K562 (cell line): ENCODE measurements at regions of chr11 and their contacts with region 1.

Region 1: GRCh38 chr11:114197799-114198500 is 98.2 kb upstream of the NNMT start:
- DNase-seq: no peak
- ATAC-seq: no peak
- H3K4me3 ChIP-seq: no peak overlapping the region
- H3K27ac ChIP-seq: no peak overlapping the region
- H3K4me1 ChIP-seq: peaks cover 7% of the 10 kb centered on the region in 2 experiments; a peak in 3 of 5 replicates
- H3K27me3 ChIP-seq: no peaks in the 10 kb centered on the region
- CTCF ChIP-seq: no peak
- EP300 ChIP-seq: no peak
- POLR2A ChIP-seq: no peak
- RAD21 ChIP-seq: no peak

Region 2: DNA sequence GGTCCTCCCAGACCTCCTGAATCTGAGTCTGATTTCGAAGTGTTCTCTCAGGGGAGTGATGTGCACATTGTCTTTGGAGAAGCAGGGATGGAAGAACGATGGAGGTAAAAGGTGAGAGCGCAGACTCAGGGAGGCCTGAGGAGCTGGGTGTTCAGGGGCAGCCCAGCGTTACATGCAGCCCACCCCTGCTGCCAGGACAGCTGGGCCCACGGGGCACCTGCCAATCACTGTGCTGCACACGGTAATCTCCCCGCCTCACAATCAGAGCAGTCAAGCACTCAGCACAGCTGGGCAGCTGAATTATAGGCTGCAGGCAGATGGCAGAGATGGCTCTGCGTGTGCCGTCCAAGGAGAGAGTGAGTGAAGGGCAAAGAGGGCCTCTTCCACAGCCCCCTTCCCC is 241.0 kb before region 1 on chr11:
- CTCF ChIA-PET with region 1: no interaction called
- POLR2A ChIA-PET with region 1: no interaction called
- in situ Hi-C with region 1: no loop called
- intact Hi-C with region 1: no loop called
- DNase-seq: no peak
- ATAC-seq: no peak
- H3K4me3 ChIP-seq: no peak overlapping the region
- H3K27ac ChIP-seq: no peak overlapping the region
- H3K4me1 ChIP-seq: no peaks in the 10 kb centered on the region
- H3K27me3 ChIP-seq: peaks cover 18 to 46% of the 10 kb centered on the region in 2 experiments
- CTCF ChIP-seq: no peak
- EP300 ChIP-seq: no peak
- POLR2A ChIP-seq: no peak
- RAD21 ChIP-seq: no peak

Region 3: GRCh38 chr11:113994077-113994954 is 203.6 kb before region 1 on chr11:
- CTCF ChIA-PET with region 1: no interaction called
- POLR2A ChIA-PET with region 1: no interaction called
- in situ Hi-C with region 1: no loop called
- intact Hi-C with region 1: loop called (anchors 10 kb)
- DNase-seq: peak; percentile 40 to 65 (median 50)
- ATAC-seq: peak; percentile 80
- H3K4me3 ChIP-seq: no peak overlapping the region
- H3K27ac ChIP-seq: no peak overlapping the region
- H3K4me1 ChIP-seq: no peaks in the 10 kb centered on the region
- H3K27me3 ChIP-seq: peaks cover 0 to 16% of the 10 kb centered on the region in 2 experiments; a peak in 2 of 5 replicates
- CTCF ChIP-seq: peak; percentile 70 to 77 (median 74)
- EP300 ChIP-seq: no peak
- POLR2A ChIP-seq: no peak
- RAD21 ChIP-seq: peak; percentile 82 to 89

Region 4: GRCh38 chr11:114036156-114036811 is 161.7 kb before region 1 on chr11:
- CTCF ChIA-PET with region 1: no interaction called
- POLR2A ChIA-PET with region 1: no interaction called
- in situ Hi-C with region 1: no loop called
- intact Hi-C with region 1: loop called (anchors 2 kb)
- DNase-seq: peak; percentile 71 to 80 (median 76)
- ATAC-seq: peak; percentile 100
- H3K4me3 ChIP-seq: no peak overlapping the region
- H3K27ac ChIP-seq: no peak overlapping the region
- H3K4me1 ChIP-seq: peaks cover 0 to 6% of the 10 kb centered on the region in 2 experiments; a peak in 1 of 5 replicates
- H3K27me3 ChIP-seq: peaks cover 12 to 47% of the 10 kb centered on the region in 2 experiments
- CTCF ChIP-seq: peak; percentile 83 to 97 (median 88)
- EP300 ChIP-seq: no peak
- POLR2A ChIP-seq: no peak
- RAD21 ChIP-seq: peak; percentile 88 to 90

Region 5: GRCh38 chr11:114148013-114148382 is 50.0 kb before region 1 on chr11:
- CTCF ChIA-PET with region 1: no interaction called
- POLR2A ChIA-PET with region 1: no interaction called
- in situ Hi-C with region 1: no loop called
- intact Hi-C with region 1: loop called (anchors 5 kb)
- DNase-seq: peak; percentile 27 to 82 (median 52)
- ATAC-seq: peak; percentile 85
- H3K4me3 ChIP-seq: no peak overlapping the region
- H3K27ac ChIP-seq: no peak overlapping the region; the same call in 2 of the 3 replicates
- H3K4me1 ChIP-seq: peaks cover 7 to 28% of the 10 kb centered on the region in 2 experiments
- H3K27me3 ChIP-seq: peaks cover 10 to 15% of the 10 kb centered on the region in 2 experiments
- CTCF ChIP-seq: no peak
- EP300 ChIP-seq: no peak; the same call in 1 of the 2 replicates
- POLR2A ChIP-seq: no peak
- RAD21 ChIP-seq: no peak; a peak in 1 of 4 replicates

Region 6: DNA sequence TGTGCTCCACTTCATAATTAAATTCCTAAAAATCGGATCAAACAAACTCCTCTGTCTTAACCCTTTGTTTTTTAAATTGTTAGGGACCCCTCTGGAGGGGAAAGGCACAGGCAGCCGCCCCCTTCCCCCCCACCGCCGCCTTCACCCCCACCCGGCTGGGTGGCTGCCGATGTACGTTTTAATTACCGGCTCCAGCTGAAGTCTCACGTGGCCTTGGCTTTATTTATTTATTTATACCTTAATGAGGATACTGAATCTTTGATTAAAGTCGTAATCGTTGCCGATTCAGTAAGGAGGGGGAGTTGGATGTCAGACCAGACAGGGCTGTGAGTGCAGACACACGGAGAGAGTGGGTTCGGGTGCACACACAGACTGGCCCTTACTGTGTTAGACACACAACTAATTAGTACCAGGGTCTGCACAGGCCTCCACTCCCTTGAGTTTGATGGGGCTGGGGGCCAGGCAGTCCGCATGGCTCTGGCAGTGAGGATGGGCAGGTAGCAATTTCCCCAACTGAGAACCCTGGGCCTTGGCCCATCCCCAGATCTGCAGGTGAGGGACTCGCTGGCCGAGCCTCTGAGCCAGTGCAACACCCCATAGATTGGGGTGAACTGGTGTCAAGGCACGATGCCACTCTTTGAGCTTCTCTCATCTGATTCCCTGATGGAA is 46.9 kb after region 1 on chr11:
- CTCF ChIA-PET with region 1: no interaction called
- POLR2A ChIA-PET with region 1: no interaction called
- in situ Hi-C with region 1: no loop called
- intact Hi-C with region 1: loop called (anchors 5 kb)
- DNase-seq: no peak
- ATAC-seq: no peak
- H3K4me3 ChIP-seq: no peak overlapping the region
- H3K27ac ChIP-seq: no peak overlapping the region
- H3K4me1 ChIP-seq: peaks cover 20 to 24% of the 10 kb centered on the region in 2 experiments; a peak in 4 of 5 replicates
- H3K27me3 ChIP-seq: no peaks in the 10 kb centered on the region
- CTCF ChIP-seq: no peak
- EP300 ChIP-seq: no peak
- POLR2A ChIP-seq: no peak
- RAD21 ChIP-seq: no peak